ENCODE measurements at regions of chr16 and their contacts with region 1.

Region 1: DNA sequence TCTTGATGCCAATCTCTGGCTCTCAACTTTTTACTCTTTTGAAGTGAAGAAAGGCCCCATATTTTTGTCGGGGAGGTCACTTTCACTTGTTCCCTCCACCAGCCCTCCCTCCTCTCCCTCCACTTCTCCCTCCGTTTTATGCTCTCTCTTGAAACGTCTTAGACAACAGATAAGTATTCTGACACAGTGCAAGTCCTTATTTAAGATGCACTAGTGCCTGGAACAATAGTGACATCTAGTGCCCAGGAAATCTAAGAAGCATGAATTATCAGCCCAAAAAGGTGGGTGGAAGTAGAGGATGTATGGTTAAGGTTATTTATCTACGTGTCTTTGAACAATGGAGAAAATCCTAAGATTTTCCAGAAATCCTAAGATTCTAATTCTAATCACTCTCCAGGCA is 17.9 kb downstream of the PSME3IP1 start:
- DNase-seq: no peak
- ATAC-seq: peak; percentile 83 to 90
- H3K4me3 ChIP-seq: no peak overlapping the region
- H3K27ac ChIP-seq: peak overlapping the region; percentile 72
- H3K4me1 ChIP-seq: peaks cover 30% of the 10 kb centered on the region
- H3K27me3 ChIP-seq: no peaks in the 10 kb centered on the region
- CTCF ChIP-seq: peak; percentile 58

Region 2: DNA sequence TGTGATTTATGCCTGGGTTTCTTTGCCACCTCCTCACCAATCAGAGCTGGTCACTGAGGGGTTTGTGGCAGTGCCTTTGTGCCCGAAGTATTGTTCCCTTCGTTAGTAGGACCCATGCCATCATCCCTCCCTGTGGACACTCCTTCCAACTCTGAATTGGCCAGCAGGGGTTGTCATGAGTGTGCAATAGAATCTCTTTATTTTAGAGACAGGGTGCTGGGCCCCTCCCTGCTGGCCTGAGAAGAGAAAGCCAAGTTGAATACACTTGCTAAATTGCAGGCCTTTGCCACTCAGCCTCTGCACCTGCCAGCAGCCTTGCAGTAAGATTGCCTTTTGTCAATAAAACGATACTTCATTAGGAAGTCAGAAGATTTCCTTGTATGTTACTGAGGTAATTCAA is 343.6 kb before region 1 on chr16:
- intact Hi-C with region 1: no loop called
- DNase-seq: peak; percentile 59
- ATAC-seq: peak; percentile 85 to 88
- H3K4me3 ChIP-seq: no peak overlapping the region
- H3K27ac ChIP-seq: no peak overlapping the region
- H3K4me1 ChIP-seq: no peaks in the 10 kb centered on the region
- H3K27me3 ChIP-seq: no peaks in the 10 kb centered on the region
- CTCF ChIP-seq: no peak

Region 3: DNA sequence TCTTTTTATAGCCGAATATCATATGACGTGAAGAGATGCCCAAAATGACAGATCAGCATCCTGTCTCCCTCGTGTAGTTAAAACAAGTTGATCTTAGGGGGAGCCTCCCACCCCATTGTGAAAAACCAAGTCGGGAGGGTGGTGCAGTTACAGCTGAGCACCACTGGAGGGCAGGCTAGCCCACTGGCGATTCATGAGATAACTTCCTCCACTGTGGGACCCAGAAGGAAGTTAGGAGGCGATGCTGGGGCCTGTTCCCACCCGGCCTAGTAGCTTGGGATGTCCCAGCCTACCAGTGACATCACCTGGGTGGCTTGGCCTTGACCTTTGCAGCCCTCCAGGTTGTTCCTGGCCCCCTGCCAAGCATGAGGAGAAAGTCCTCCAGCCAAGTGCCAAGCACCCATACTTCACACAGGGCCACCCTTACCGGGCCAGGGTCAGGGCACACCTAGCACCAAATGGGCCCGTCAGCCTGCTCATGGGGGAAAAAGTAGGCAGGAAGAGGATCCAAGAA is 83.6 kb before region 1 on chr16:
- intact Hi-C with region 1: loop called (anchors 10 kb)
- DNase-seq: peak; percentile 86
- ATAC-seq: peak; percentile 92 to 94
- H3K4me3 ChIP-seq: no peak overlapping the region
- H3K27ac ChIP-seq: peak overlapping the region; percentile 56
- H3K4me1 ChIP-seq: peaks cover 12% of the 10 kb centered on the region
- H3K27me3 ChIP-seq: no peaks in the 10 kb centered on the region
- CTCF ChIP-seq: peak; percentile 99

Measured in lower lobe of right lung (tissue), 2 donors.